ENCODE measurements at regions of chr3 and their contacts with region 1.

Region 1: GRCh38 chr3:72426618-72427397 is 421.4 kb downstream of the SHQ1 start:
- DNase-seq: no peak
- ATAC-seq: peak; percentile 85
- H3K4me3 Mint-ChIP-seq: peak overlapping the region; percentile 6
- H3K27ac Mint-ChIP-seq: peak overlapping the region; percentile 77
- H3K4me1 Mint-ChIP-seq: peaks cover 80% of the 10 kb centered on the region
- H3K27me3 Mint-ChIP-seq: no peaks in the 10 kb centered on the region

Region 2: DNA sequence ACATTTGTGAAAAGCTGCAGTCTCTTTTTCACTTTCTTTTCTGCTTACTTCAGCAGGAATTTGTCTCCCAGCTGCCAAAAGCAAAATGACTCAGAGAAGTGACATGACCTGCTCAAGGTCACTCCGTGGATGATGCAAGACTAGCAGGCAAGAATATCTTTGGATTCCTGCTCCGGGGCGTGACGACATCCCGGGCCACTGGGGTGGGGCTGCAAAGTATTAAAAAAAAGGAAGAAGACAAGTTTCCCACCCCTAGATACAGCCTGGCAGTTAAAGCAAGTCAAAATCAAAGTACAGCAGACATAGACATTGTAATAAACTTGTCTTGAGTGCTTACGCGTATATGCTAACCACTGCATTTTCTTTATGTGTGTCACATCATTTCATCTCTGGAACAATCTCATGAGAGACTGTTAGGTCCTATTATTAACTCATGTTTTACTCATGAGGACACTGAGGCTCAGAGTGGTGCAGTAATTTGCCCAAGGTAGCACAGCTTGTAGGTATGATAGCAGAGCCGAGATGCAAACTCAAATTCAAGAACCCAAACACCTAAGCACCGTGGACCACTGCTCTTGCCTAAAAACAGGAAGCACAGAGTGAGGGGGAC is 156.6 kb before region 1 on chr3:
- CTCF ChIA-PET with region 1: no interaction called
- POLR2A ChIA-PET with region 1: interaction called, 4 read pairs
- intact Hi-C with region 1: loop called in 1 of 2 experiments (anchors 5 kb)
- DNase-seq: peak; percentile 38
- ATAC-seq: peak; percentile 59
- H3K4me3 Mint-ChIP-seq: no peak overlapping the region
- H3K27ac Mint-ChIP-seq: peak overlapping the region; percentile 69
- H3K4me1 Mint-ChIP-seq: peaks cover 68% of the 10 kb centered on the region
- H3K27me3 Mint-ChIP-seq: peaks cover 3% of the 10 kb centered on the region

Region 3: DNA sequence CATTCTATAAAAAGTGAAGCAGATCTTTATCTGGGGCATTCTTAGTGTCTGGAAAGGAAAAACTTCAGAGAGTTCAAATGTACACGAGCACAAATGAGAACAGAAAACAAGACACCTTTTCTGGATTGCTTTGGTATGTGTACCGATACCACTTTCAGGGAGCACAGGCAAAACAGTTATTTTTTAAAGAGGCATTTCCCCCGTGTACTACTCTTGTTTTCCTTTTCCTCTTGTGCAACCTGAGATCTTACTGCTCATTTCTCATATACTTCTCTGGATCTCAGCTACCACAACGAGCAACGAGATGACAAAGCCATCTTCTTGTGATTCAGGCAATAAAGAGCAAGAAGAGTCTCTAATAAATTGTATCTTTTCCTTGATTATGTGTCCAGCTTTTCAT is 42.2 kb before region 1 on chr3:
- CTCF ChIA-PET with region 1: no interaction called
- POLR2A ChIA-PET with region 1: no interaction called
- intact Hi-C with region 1: loop called in 1 of 2 experiments (anchors 2 kb)
- DNase-seq: no peak
- ATAC-seq: peak; percentile 26
- H3K4me3 Mint-ChIP-seq: no peak overlapping the region
- H3K27ac Mint-ChIP-seq: no peak overlapping the region
- H3K4me1 Mint-ChIP-seq: peaks cover 94% of the 10 kb centered on the region
- H3K27me3 Mint-ChIP-seq: no peaks in the 10 kb centered on the region

Region 4: GRCh38 chr3:72401005-72401545 is 25.7 kb before region 1 on chr3:
- CTCF ChIA-PET with region 1: no interaction called
- POLR2A ChIA-PET with region 1: no interaction called
- intact Hi-C with region 1: no loop called
- DNase-seq: no peak
- ATAC-seq: no peak
- H3K4me3 Mint-ChIP-seq: no peak overlapping the region
- H3K27ac Mint-ChIP-seq: no peak overlapping the region
- H3K4me1 Mint-ChIP-seq: peaks cover 80% of the 10 kb centered on the region
- H3K27me3 Mint-ChIP-seq: no peaks in the 10 kb centered on the region

Region 5: GRCh38 chr3:72447059-72447946 is 20.5 kb after region 1 on chr3:
- CTCF ChIA-PET with region 1: no interaction called
- POLR2A ChIA-PET with region 1: interaction called, 3 read pairs
- intact Hi-C with region 1: loop called (anchors 2 kb)
- DNase-seq: peak; percentile 96
- ATAC-seq: peak; percentile 87
- H3K4me3 Mint-ChIP-seq: peak overlapping the region; percentile 43
- H3K27ac Mint-ChIP-seq: peak overlapping the region; percentile 63
- H3K4me1 Mint-ChIP-seq: peaks cover 38% of the 10 kb centered on the region
- H3K27me3 Mint-ChIP-seq: peaks cover 13% of the 10 kb centered on the region

Region 6: DNA sequence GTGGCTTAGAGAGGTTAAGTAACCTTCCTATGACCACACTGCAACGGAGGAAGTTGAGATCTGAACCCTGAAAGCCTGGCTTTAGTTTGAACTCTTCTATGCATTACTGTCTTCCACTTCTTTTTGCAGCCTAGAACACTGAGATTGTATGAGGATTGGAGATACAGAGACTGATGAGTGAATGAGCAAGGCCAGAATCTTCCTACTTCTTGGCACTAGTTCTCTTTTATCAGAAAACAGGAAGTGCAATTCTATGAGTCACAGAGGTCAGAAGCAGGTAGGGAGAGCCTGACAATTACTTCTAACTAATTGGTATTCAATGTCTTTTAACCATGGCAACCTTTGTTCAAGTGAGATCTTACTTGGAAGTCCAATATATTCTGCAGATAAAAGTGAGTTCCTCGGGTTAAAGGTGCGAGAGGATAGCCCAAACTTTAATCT is 202.4 kb after region 1 on chr3:
- CTCF ChIA-PET with region 1: interaction called, 3 read pairs
- POLR2A ChIA-PET with region 1: interaction called, 6 read pairs
- intact Hi-C with region 1: loop called (anchors 5 kb)
- DNase-seq: no peak
- ATAC-seq: peak; percentile 67
- H3K4me3 Mint-ChIP-seq: no peak overlapping the region
- H3K27ac Mint-ChIP-seq: peak overlapping the region; percentile 79
- H3K4me1 Mint-ChIP-seq: peaks cover 60% of the 10 kb centered on the region
- H3K27me3 Mint-ChIP-seq: no peaks in the 10 kb centered on the region

Measured in activated CD4-positive, alpha-beta T cell treated with anti-CD3 and anti-CD28 coated beads for 36 hours (primary cell).